ENCODE measurements at regions of chr12 and their contacts with region 1.

Region 1: DNA sequence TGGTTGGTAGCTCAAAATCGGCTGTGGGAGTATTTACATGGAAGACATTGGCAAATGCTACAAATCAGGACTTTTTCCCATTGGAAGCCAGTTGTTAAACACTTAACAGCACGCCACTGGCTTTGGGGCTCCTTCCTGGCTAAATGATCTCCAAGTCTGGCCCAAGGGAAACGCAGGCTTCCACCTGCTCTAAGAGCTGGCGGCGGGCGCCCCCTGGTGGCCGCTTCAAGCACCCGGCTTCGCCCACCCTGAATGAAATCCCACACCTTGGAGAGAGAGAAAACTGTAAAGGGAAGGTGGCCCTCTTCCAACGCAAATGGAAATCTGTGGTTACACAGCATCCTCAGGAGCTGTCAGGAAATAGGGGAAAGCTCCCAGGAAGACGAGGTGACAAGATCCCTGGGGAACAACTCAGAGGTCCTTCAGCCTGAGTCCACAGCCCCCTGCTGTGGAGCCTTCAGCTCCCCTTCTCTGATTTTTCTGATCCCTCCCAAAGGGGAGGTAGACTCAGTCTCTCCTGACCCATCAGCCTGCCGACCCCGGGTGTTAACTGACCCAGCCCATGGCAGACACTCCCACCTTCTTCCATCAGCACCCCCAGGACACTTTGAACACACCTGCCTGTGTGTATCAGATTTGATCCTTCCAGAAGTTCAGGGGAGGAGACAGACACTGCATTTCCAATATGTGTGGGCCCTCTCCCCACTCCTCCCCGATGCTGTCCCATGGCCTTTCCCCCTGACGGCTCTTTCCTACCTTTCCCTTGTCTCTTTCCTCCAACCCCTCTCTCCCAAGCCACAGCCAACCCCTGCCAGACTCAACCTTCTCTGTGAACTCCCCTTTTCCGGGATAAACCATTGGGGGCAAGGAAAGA is 15.4 kb downstream of the SELPLG start:
- DNase-seq: peak; percentile 88

Region 2: DNA sequence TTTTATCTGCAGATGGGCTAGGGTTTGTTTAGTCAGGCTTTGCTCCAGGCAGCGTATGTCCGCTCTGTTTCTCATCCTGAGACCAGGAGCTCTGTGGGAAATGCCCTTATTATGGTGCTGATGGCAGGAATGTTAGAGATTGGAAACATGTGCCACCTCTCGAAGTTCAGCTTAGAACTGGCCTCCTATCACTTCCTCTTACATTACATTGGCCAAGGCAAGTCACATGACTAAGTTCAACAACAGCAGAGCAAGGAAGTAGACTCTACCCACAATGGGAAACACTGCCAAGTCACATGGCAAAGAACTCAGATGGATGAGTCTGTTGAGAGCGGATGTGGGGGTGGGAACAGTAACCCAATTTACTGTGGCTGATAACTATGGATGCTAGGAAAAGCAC is 651.1 kb before region 1 on chr12:
- intact Hi-C with region 1: no loop called
- DNase-seq: no peak

Region 3: GRCh38 chr12:108570743-108571608 is 47.3 kb before region 1 on chr12:
- intact Hi-C with region 1: loop called (anchors 2 kb)
- DNase-seq: peak; percentile 55

Region 4: GRCh38 chr12:108664338-108665258 is 46.3 kb after region 1 on chr12:
- intact Hi-C with region 1: no loop called
- DNase-seq: peak; percentile 92

Region 5: GRCh38 chr12:110312581-110313360 is 1694.5 kb after region 1 on chr12:
- intact Hi-C with region 1: no loop called
- DNase-seq: no peak

Measured in cardiac septum (tissue), 1 donor.